ENCODE measurements at regions of chr2 and their contacts with region 1.

Region 1: GRCh38 chr2:234550511-234551107 is 53.7 kb upstream of the ARL4C start:
- ATAC-seq: peak; percentile 36 to 93 (median 44)
- H3K4me3 ChIP-seq: no peak overlapping the region
- H3K27ac ChIP-seq: no peak overlapping the region
- H3K4me1 ChIP-seq: peaks cover 21 to 31% of the 10 kb centered on the region in 2 donors

Region 2: GRCh38 chr2:234951664-234952269 is 401.2 kb after region 1 on chr2 and contains the start of gene SH3BP4:
- in situ Hi-C with region 1: loop called in 3 of 9 experiments (anchors 25 kb)
- ATAC-seq: peak; percentile 51 to 78 (median 76)
- H3K4me3 ChIP-seq: peak within 1 kb of the TSS; percentile 79 to 99 (median 93)
- H3K27ac ChIP-seq: peak within 1 kb of the TSS; percentile 81 to 86
- H3K4me1 ChIP-seq: peaks cover 44 to 50% of the 10 kb centered on the region in 2 donors
- total RNA-seq, gene SH3BP4: 16.7 to 41.1 (median 26.7) TPM

Region 3: GRCh38 chr2:235116885-235117492 is 566.4 kb after region 1 on chr2:
- in situ Hi-C with region 1: loop called in 5 of 9 experiments (anchors 10 to 25 kb)
- ATAC-seq: peak in 1 of 8 experiments; percentile 31
- H3K4me3 ChIP-seq: no peak overlapping the region
- H3K27ac ChIP-seq: no peak overlapping the region
- H3K4me1 ChIP-seq: peaks cover 4 to 6% of the 10 kb centered on the region in 2 donors